GM13977 (cell line): ENCODE measurements at regions of chr6 and their contacts with region 1.

Region 1: GRCh38 chr6:73129653-73130443 is 95.4 kb downstream of the KHDC1L start:
- DNase-seq: peak; percentile 58
- CTCF ChIP-seq: peak; percentile 100

Region 2: DNA sequence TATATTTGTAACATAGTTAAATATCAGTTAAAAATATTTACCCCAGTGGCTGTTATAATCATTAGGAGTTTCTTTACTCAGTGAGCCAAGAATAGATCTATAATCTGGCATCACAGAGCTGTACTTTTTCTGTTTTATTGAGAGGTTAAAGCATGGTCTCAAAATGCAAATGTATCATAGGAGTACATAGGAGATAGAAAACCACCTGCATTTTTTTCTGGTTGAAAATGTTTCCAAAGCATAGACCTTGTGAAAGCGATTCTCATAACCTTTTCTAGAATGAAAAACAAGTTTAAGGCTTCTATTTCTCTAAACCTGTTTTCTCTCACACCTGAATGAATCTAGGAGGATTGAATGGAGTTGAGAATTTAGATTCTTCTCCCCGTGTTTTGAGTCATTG is 493.6 kb before region 1 on chr6:
- in situ Hi-C with region 1: loop called (anchors 10 kb)
- DNase-seq: no peak
- CTCF ChIP-seq: no peak

Region 3: GRCh38 chr6:73349311-73349710 is 219.5 kb after region 1 on chr6:
- in situ Hi-C with region 1: no loop called
- DNase-seq: no peak
- CTCF ChIP-seq: no peak